Kidney (tissue), 22 donors: ENCODE measurements at regions of chr17 and their contacts with region 1.

Region 1: GRCh38 chr17:42577532-42578281 is at the start of gene PSMC3IP:
- DNase-seq: peak; percentile 95 to 98 (median 97)
- H3K4me3 ChIP-seq: peak within 1 kb of the TSS; percentile 77 to 91 (median 83)
- H3K27ac ChIP-seq: peak within 1 kb of the TSS; percentile 88 to 93
- H3K4me1 ChIP-seq: peaks cover 0 to 13% (median 8%) of the 10 kb centered on the region in 3 donors
- H3K27me3 ChIP-seq: no peaks in the 10 kb centered on the region
- CTCF ChIP-seq: no peak
- total RNA-seq, gene PSMC3IP: 5.8 TPM

Region 2: GRCh38 chr17:42527273-42527703 is 50.4 kb before region 1 on chr17:
- intact Hi-C with region 1: no loop called
- DNase-seq: peak; percentile 82 to 92 (median 84)
- H3K4me3 ChIP-seq: no peak overlapping the region
- H3K27ac ChIP-seq: no peak overlapping the region
- H3K4me1 ChIP-seq: peaks cover 0 to 12% (median 10%) of the 10 kb centered on the region in 3 donors
- H3K27me3 ChIP-seq: no peaks in the 10 kb centered on the region
- CTCF ChIP-seq: peak; percentile 86

Region 3: DNA sequence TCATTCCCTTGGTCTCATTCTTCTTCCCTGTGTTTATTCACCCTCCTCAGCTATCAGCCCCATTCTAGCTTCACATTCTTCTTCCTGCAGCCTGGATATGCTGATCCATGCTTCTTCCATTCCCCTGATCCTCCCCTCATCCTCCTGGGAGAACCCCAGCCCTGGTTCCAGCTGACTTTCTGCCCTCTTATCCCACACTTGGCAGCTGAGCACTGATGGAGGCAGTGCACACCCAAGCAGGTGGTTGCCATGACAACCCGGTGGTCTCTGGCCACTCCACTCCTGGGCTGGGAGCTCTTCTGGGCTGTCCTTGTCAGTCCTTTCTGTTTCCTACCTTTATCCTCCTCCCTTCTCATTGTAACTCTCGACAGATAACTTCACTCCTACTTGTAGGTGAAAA is 64.6 kb after region 1 on chr17:
- intact Hi-C with region 1: no loop called
- DNase-seq: peak in 1 of 5 donors; percentile 25
- H3K4me3 ChIP-seq: no peak overlapping the region
- H3K27ac ChIP-seq: no peak overlapping the region
- H3K4me1 ChIP-seq: no peaks in the 10 kb centered on the region
- H3K27me3 ChIP-seq: no peaks in the 10 kb centered on the region
- CTCF ChIP-seq: no peak

Region 4: DNA sequence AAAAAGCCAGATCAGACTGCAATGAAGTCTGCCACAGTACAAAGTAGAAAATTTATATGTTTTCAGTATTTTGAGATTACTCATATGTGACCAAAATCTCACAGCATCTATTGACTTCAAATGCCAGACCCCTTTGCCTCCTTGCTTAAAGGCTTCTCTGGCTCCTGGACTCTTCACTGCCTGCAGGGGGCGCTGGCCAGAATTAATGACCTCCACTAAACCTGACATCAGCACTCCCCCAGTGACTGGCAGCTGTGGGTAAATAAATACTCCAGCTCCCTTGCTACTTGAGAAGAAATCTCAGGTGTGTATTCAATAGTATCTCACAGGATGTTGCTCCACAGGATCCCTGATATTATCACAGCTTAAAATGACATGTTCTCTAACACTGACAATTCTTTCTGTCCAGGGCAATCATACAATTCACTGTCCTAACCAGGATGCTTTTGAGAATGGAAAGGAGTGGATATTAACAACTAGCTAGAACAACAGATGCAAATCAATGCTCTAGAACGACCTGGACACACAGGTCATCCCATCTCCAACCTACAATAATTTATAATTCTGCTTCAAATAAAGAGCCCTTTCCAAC is 242.3 kb after region 1 on chr17:
- intact Hi-C with region 1: loop called (anchors 10 kb)
- DNase-seq: peak in 3 of 5 donors; percentile 60 to 79 (median 69)
- H3K4me3 ChIP-seq: no peak overlapping the region
- H3K27ac ChIP-seq: no peak overlapping the region
- H3K4me1 ChIP-seq: peaks cover 0 to 8% (median 5%) of the 10 kb centered on the region in 3 donors
- H3K27me3 ChIP-seq: no peaks in the 10 kb centered on the region
- CTCF ChIP-seq: peak; percentile 38